K562 (cell line): ENCODE measurements at regions of chr1 and their contacts with region 1.

Region 1: DNA sequence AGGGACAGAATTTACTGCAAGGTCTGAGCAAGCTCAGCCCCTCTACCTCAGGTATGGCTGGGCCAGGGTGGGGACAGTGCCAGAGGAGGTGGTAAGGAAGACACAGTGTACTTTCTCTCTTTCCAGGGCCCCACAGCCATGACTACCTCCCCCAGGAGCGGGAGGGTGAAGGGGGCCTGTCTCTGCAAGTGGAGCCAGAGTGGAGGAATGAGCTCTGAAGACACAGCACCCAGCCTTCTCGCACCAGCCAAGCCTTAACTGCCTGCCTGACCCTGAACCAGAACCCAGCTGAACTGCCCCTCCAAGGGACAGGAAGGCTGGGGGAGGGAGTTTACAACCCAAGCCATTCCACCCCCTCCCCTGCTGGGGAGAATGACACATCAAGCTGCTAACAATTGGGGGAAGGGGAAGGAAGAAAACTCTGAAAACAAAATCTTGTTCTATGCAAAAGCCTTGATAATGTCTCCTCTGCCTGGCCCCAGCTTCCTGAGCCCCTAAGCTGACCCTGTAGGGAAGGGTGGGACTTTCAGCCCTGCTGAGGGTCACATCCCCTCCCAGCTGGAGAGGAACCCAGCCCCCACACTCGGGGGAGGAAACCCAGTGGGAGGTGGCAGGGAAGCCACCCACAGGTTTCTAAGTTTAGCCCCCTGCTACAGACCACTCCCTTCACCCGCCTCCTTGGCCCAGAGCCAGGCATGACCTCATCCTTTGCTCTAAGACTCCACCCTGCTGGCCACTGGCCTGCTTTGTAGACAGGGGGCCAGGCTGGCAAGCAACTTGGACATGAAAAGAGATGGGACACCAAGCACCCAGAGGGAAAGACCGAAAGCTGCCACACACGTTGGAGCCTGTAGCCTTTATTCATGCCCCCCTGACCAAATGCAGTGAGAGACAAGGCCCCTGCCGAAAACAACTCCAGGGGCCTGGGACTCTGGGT is 6.4 kb downstream of the RHOC start:
- DNase-seq: peak; percentile 94 to 100 (median 96)
- ATAC-seq: peak; percentile 77
- H3K4me3 ChIP-seq: peak overlapping the region; percentile 4; the same call in 1 of the 2 replicates
- H3K27ac ChIP-seq: peak overlapping the region; percentile 97
- H3K4me1 ChIP-seq: peaks cover 87 to 89% of the 10 kb centered on the region in 2 experiments
- H3K27me3 ChIP-seq: no peaks in the 10 kb centered on the region
- CTCF ChIP-seq: peak in 2 of 3 experiments; percentile 30 to 35; a peak in 3 of 6 replicates
- EP300 ChIP-seq: peak; percentile 88
- POLR2A ChIP-seq: peak; percentile 77
- RAD21 ChIP-seq: no peak; a peak in 2 of 4 replicates

Region 2: GRCh38 chr1:112575154-112575804 is 125.3 kb before region 1 on chr1:
- CTCF ChIA-PET with region 1: no interaction called
- POLR2A ChIA-PET with region 1: no interaction called
- in situ Hi-C with region 1: no loop called
- intact Hi-C with region 1: no loop called
- DNase-seq: peak; percentile 42 to 78 (median 63)
- ATAC-seq: peak; percentile 98
- H3K4me3 ChIP-seq: no peak overlapping the region
- H3K27ac ChIP-seq: peak overlapping the region; percentile 8; the same call in 2 of the 3 replicates
- H3K4me1 ChIP-seq: peaks cover 0 to 9% of the 10 kb centered on the region in 2 experiments; a peak in 3 of 5 replicates
- H3K27me3 ChIP-seq: no peaks in the 10 kb centered on the region
- CTCF ChIP-seq: no peak
- EP300 ChIP-seq: peak; percentile 74
- POLR2A ChIP-seq: no peak
- RAD21 ChIP-seq: no peak

Region 3: GRCh38 chr1:112688781-112689193 is 11.8 kb before region 1 on chr1:
- CTCF ChIA-PET with region 1: no interaction called
- POLR2A ChIA-PET with region 1: interaction called, 31 read pairs
- in situ Hi-C with region 1: no loop called
- intact Hi-C with region 1: no loop called
- DNase-seq: peak in 1 of 4 experiments; percentile 67
- ATAC-seq: peak; percentile 54
- H3K4me3 ChIP-seq: no peak overlapping the region
- H3K27ac ChIP-seq: no peak overlapping the region
- H3K4me1 ChIP-seq: peaks cover 18% of the 10 kb centered on the region in 2 experiments; a peak in 4 of 5 replicates
- H3K27me3 ChIP-seq: no peaks in the 10 kb centered on the region
- CTCF ChIP-seq: no peak
- EP300 ChIP-seq: no peak
- POLR2A ChIP-seq: no peak
- RAD21 ChIP-seq: no peak

Region 4: GRCh38 chr1:113242481-113242880 is 541.9 kb after region 1 on chr1:
- CTCF ChIA-PET with region 1: no interaction called
- POLR2A ChIA-PET with region 1: no interaction called
- in situ Hi-C with region 1: no loop called
- intact Hi-C with region 1: no loop called
- DNase-seq: peak in 1 of 4 experiments; percentile 51
- ATAC-seq: peak; percentile 62
- H3K4me3 ChIP-seq: no peak overlapping the region
- H3K27ac ChIP-seq: no peak overlapping the region
- H3K4me1 ChIP-seq: no peaks in the 10 kb centered on the region; a peak in 3 of 5 replicates
- H3K27me3 ChIP-seq: peaks cover 0 to 2% of the 10 kb centered on the region in 2 experiments; a peak in 2 of 5 replicates
- CTCF ChIP-seq: no peak
- EP300 ChIP-seq: no peak
- POLR2A ChIP-seq: no peak
- RAD21 ChIP-seq: no peak